PC-9 (cell line): ENCODE measurements at regions of chr12 and their contacts with region 1.

Region 1: GRCh38 chr12:1939801-1940607 is 21.6 kb upstream of the CACNA2D4 start:
- DNase-seq: peak; percentile 58 to 81
- H3K4me3 ChIP-seq: no peak overlapping the region
- H3K27ac ChIP-seq: no peak overlapping the region
- H3K4me1 ChIP-seq: no peaks in the 10 kb centered on the region
- H3K27me3 ChIP-seq: no peaks in the 10 kb centered on the region
- CTCF ChIP-seq: peak; percentile 96

Region 2: GRCh38 chr12:1634590-1635191 is 305.3 kb before region 1 on chr12:
- CTCF ChIA-PET with region 1: interaction called, 7 read pairs
- POLR2A ChIA-PET with region 1: no interaction called
- intact Hi-C with region 1: loop called (anchors 1 kb)
- DNase-seq: peak; percentile 50 to 63
- H3K4me3 ChIP-seq: no peak overlapping the region
- H3K27ac ChIP-seq: no peak overlapping the region
- H3K4me1 ChIP-seq: no peaks in the 10 kb centered on the region
- H3K27me3 ChIP-seq: peaks cover 52% of the 10 kb centered on the region
- CTCF ChIP-seq: peak; percentile 90

Region 3: GRCh38 chr12:1650260-1650977 is 289.6 kb before region 1 on chr12:
- CTCF ChIA-PET with region 1: interaction called, 13 read pairs
- POLR2A ChIA-PET with region 1: no interaction called
- intact Hi-C with region 1: loop called (anchors 1 kb)
- DNase-seq: no peak
- H3K4me3 ChIP-seq: no peak overlapping the region
- H3K27ac ChIP-seq: no peak overlapping the region
- H3K4me1 ChIP-seq: no peaks in the 10 kb centered on the region
- H3K27me3 ChIP-seq: no peaks in the 10 kb centered on the region
- CTCF ChIP-seq: no peak

Region 4: GRCh38 chr12:1767407-1768297 is 172.4 kb before region 1 on chr12:
- CTCF ChIA-PET with region 1: no interaction called
- POLR2A ChIA-PET with region 1: interaction called, 10 read pairs
- intact Hi-C with region 1: no loop called
- DNase-seq: no peak
- H3K4me3 ChIP-seq: no peak overlapping the region
- H3K27ac ChIP-seq: 0 out of 2 replicates have a peak overlapping the region, but pooled peaks have one; percentile 0
- H3K4me1 ChIP-seq: peaks cover 15% of the 10 kb centered on the region
- H3K27me3 ChIP-seq: no peaks in the 10 kb centered on the region
- CTCF ChIP-seq: no peak